ENCODE measurements at regions of chr7 and their contacts with region 1.

Region 1: DNA sequence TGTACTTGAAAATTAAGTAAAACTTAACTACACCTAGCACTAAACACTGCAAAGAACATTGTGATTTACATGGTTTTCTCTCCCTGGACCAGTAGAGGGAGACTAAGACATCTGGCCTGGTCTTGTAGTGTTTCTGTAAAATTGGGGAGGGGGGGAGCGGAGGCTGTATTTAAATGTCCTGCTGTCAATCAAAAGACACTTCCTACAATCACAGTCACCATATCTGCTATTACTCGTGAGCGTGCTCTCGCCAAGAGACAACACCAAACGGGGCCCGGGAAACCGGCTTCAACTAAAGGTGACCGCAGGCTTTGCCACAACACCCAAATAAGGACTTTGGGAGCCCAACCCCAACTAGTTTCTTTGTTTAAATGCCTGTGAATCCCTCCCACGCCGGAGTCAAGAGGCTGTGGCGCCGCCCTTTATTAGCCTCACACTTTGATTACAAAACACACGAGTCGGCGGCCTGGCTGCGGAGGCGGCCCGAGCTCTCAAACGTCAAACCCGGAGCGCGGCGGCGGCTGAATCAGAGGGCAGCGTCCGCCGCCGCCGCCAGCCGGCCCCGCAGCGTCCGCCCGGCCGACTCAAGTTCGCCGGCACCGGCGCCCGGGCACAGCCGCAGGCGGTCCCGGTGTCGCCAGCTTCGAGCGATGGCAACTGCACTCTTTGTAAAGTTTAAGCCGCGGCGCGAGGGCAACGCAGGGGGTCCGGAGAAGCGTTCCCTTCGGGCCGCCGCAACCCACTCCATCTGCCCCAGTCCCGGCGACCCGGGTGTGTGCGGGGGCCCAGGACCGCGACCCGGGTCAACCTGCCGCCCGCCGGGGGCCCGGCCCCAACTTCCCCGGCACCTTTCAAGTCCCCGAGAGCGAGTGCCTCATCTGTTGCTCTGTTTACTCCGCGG is 1.3 kb downstream of the KDM7A start:
- DNase-seq: peak; percentile 91
- H3K4me3 ChIP-seq: peak overlapping the region; percentile 73
- H3K27ac ChIP-seq: peak overlapping the region; percentile 48
- H3K4me1 ChIP-seq: peaks cover 5% of the 10 kb centered on the region
- CTCF ChIP-seq: peak; percentile 94

Region 2: GRCh38 chr7:139777948-139778841 is 397.3 kb before region 1 on chr7 and contains the start of gene HIPK2:
- CTCF ChIA-PET with region 1: no interaction called
- POLR2A ChIA-PET with region 1: no interaction called
- intact Hi-C with region 1: loop called (anchors 10 kb)
- DNase-seq: peak; percentile 80
- H3K4me3 ChIP-seq: peak within 1 kb of the TSS; percentile 82
- H3K27ac ChIP-seq: peak within 1 kb of the TSS; percentile 0
- H3K4me1 ChIP-seq: peaks cover 23% of the 10 kb centered on the region
- CTCF ChIP-seq: no peak
- total RNA-seq, gene HIPK2: 5.9 and 6.2 TPM in 2 replicates

Region 3: DNA sequence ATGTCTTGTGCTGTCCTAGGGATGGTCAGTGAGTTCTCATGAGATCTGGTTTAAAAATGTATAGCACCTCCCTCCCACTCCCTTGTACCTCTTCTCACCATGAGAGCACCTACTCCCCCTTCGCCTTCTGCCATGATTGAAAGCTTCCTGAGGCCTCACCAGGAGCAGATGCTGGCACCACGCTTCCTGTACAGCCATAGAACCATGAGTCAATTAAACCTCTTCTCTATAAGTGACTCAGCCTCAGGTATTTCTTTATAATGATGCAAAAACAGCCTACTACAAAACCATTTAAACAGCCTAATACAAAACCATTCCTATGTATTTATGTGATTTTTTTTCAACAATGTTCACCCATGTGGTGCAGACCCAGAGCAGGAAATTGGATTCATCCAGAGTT is 30.6 kb before region 1 on chr7:
- CTCF ChIA-PET with region 1: no interaction called
- POLR2A ChIA-PET with region 1: no interaction called
- intact Hi-C with region 1: no loop called
- DNase-seq: no peak
- H3K4me3 ChIP-seq: no peak overlapping the region
- H3K27ac ChIP-seq: no peak overlapping the region
- H3K4me1 ChIP-seq: no peaks in the 10 kb centered on the region
- CTCF ChIP-seq: no peak

Region 4: DNA sequence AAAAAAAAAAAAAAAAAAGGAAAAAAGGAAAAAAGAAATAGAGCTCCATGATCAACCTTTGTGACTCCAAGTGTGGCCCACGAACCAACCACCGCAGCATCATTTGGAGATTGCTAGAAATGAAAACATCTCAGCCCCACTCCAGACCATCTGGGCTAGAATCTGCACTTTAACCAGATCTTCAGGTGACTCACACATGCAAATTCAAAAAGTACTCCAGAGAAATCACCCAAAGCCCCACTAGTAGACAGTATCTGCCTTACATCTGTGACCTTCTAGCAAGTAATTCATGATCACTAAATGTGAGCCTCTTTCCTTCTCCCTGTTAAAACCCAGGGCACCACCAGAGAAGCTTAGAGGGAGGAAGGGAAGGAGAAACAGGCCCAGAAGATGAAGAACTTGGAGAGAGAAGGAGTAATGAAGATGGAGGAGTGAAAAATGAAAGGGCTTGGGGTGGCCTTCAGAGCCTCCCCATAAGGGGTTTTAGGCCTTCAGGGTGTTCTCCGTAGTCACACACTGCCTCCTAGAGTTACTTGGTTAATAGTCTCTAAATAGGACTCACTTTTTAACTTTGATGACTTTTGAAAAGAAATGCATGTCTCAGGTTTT is 128.8 kb after region 1 on chr7:
- CTCF ChIA-PET with region 1: interaction called, 3 read pairs
- POLR2A ChIA-PET with region 1: no interaction called
- intact Hi-C with region 1: loop called (anchors 1 kb)
- DNase-seq: peak; percentile 52
- H3K4me3 ChIP-seq: no peak overlapping the region
- H3K27ac ChIP-seq: no peak overlapping the region
- H3K4me1 ChIP-seq: no peaks in the 10 kb centered on the region
- CTCF ChIP-seq: peak; percentile 67

Region 5: GRCh38 chr7:140342727-140343514 is 167.4 kb after region 1 on chr7:
- CTCF ChIA-PET with region 1: interaction called, 5 read pairs
- POLR2A ChIA-PET with region 1: interaction called, 3 read pairs
- intact Hi-C with region 1: loop called (anchors 5 kb)
- DNase-seq: peak; percentile 63
- H3K4me3 ChIP-seq: no peak overlapping the region
- H3K27ac ChIP-seq: no peak overlapping the region
- H3K4me1 ChIP-seq: peaks cover 4% of the 10 kb centered on the region
- CTCF ChIP-seq: peak; percentile 76

Region 6: DNA sequence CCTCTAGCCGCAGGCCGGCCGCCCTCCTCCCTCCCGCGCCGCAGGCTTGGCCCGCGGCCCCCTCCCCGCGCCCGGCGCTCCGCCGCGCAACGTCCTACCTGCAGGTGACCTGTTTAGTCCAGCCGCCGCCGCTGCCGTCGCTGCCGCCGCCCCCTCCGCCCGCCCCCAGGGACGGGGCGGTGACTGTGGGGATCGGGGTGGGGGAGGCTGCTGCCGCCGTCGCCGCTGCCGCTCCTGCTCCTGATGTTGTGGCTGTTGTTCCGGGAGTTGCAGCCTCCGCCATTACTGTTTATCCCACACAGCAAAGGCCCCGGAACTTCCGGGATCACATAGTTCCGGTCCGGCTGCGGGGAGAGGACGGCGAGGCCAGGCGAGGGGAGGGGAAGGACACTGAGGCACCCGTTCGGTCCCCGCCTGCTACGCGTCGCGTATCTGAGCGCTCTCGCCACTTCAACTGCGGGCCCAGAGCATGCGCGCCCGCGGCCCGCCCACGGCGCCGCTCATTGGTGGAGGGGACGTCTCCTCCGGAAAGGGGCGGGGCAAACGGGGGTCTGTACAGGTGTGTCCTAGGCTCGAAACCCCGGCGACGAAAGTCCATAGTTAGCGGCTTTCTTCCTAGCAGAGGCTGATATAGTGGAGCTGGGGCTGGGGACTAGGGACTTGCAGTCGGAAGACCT is 303.7 kb after region 1 on chr7 and contains the start of gene MKRN1:
- CTCF ChIA-PET with region 1: no interaction called
- POLR2A ChIA-PET with region 1: no interaction called
- intact Hi-C with region 1: loop called (anchors 1 kb)
- DNase-seq: peak; percentile 94
- H3K4me3 ChIP-seq: peak within 1 kb of the TSS; percentile 98
- H3K27ac ChIP-seq: peak within 1 kb of the TSS; percentile 72
- H3K4me1 ChIP-seq: peaks cover 24% of the 10 kb centered on the region
- CTCF ChIP-seq: no peak
- total RNA-seq, gene MKRN1: 26.4 and 47.5 TPM in 2 replicates

Region 7: DNA sequence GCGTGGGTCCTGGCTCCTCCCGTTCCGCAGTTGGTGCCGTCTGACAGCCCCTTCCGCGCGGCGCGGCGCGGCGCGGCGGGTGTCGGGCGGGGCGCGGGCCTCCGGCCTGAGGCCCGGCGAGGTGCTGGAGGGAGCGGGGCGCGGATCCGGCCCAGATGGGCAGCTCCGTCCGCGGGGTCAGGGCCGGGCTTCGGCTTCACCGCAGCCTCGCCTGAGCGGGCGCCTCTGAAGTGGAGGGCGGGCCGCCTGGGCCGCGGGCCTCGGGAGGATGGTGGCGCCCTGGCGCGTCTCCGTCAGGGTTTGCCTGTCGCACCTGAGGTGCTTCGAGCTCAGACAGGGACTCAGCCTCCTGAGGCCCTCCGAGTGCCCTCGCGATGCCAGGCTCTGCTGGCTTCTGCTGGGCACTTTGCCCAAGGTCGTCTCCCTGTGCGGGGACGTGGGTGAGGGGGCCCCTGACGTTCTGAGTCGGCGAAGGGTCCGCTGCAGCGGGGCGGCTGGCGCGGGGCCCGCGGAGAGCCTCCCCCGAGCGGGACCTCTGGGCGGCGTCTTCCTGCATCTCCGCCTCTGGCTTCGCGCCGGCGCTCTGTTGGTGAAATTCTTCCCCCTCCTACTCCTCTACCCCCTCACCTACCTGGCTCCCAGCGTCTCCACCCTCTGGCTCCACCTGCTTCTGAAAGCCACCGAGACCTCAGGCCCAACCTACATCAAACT is 497.7 kb after region 1 on chr7:
- CTCF ChIA-PET with region 1: no interaction called
- POLR2A ChIA-PET with region 1: no interaction called
- intact Hi-C with region 1: loop called (anchors 1 kb)
- DNase-seq: peak; percentile 69
- H3K4me3 ChIP-seq: peak overlapping the region; percentile 81
- H3K27ac ChIP-seq: peak overlapping the region; percentile 98
- H3K4me1 ChIP-seq: peaks cover 63% of the 10 kb centered on the region
- CTCF ChIP-seq: peak; percentile 29; the same call in 1 of the 2 replicates

Measured in OCI-LY7 (cell line).